Ascending aorta (tissue), 2 donors: ENCODE measurements at regions of chr17 and their contacts with region 1.

Region 1: DNA sequence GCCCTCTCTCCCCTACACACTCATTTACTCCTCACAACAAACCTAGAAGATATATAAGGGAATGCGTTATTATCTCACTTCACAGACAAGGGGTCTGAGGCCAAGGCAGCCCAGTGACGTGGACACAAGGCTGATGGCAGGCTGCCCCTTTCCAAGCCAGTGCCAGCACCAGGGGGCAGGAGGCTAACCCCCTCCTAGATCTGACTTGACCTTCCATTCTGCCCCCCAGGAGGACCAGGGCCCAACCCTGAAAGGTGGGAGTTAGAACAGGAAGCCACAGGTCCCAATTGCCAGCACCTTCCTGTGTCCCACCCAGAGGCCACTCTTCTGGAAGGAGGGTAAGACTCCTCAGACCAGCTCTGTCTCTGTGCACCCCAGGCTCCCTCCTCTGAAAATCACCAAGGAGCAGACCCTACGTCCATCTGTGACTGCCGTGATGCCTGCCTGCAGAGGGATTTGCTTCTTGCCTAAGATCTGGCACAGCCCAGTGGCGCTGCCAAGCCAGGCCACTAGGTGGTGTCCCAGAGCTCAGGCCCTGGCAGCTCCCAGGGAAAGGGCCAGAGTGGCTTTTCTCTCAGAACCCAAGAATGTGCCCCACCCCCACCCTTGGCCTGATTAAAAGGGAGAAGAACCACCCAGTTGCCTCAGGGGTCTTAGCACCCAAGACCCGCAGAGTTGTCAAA is 42.4 kb upstream of the MRPS23 start:
- DNase-seq: peak; percentile 70 to 95
- H3K4me3 ChIP-seq: no peak overlapping the region
- H3K27ac ChIP-seq: peak overlapping the region; percentile 88 to 97
- H3K4me1 ChIP-seq: peaks cover 34 to 65% of the 10 kb centered on the region in 2 donors
- H3K27me3 ChIP-seq: no peaks in the 10 kb centered on the region
- CTCF ChIP-seq: peak; percentile 96 to 99 (median 96)

Region 2: GRCh38 chr17:57875309-57876115 is 16.8 kb before region 1 on chr17:
- intact Hi-C with region 1: loop called (anchors 1 kb)
- DNase-seq: peak; percentile 74 to 96
- H3K4me3 ChIP-seq: peak overlapping the region in 1 of 2 donors; percentile 49
- H3K27ac ChIP-seq: peak overlapping the region; percentile 80 to 85
- H3K4me1 ChIP-seq: peaks cover 33 to 52% of the 10 kb centered on the region in 2 donors
- H3K27me3 ChIP-seq: no peaks in the 10 kb centered on the region
- CTCF ChIP-seq: peak; percentile 43 to 65 (median 63)

Region 3: DNA sequence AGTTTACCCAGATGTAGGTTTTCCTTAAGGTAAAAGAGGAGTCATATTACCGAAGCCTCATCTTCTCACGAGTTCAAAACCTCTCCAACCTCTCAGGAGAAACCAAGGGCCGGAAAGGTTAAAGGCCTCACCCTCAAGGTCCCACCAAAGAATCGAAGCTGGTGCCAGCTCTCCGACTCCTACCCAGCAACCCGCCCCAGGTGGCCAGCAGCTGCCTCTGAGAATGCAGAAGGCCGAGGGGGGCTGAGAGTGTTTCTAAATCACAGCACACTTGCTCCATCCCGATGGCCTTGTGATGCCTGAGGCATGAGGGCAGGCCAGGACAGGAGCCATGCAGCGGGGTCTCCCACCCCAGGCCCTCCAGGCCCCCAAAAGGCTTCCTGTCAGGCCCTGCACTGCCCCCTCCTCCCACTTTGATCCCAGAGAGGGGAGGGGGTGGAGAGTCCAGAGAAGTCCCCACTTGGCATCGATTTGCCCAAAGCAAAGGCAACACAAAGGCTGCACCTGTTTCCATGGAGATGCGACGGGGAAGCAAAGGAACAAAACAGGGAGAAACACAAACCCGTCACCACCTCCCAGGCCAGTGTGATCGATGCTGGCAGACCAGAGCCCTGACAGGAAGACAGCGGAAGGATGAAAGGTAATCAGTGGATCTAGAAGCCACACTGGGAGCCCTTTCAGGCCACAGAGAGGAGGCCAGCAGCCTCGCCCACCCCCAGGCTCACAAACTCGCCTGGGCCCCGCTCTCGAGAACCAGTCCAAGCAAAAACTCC is 23.9 kb after region 1 on chr17:
- intact Hi-C with region 1: loop called (anchors 2 kb)
- DNase-seq: no peak
- H3K4me3 ChIP-seq: no peak overlapping the region
- H3K27ac ChIP-seq: peak overlapping the region; percentile 20 to 44
- H3K4me1 ChIP-seq: peaks cover 0 to 51% of the 10 kb centered on the region in 2 donors
- H3K27me3 ChIP-seq: no peaks in the 10 kb centered on the region
- CTCF ChIP-seq: no peak

Region 4: DNA sequence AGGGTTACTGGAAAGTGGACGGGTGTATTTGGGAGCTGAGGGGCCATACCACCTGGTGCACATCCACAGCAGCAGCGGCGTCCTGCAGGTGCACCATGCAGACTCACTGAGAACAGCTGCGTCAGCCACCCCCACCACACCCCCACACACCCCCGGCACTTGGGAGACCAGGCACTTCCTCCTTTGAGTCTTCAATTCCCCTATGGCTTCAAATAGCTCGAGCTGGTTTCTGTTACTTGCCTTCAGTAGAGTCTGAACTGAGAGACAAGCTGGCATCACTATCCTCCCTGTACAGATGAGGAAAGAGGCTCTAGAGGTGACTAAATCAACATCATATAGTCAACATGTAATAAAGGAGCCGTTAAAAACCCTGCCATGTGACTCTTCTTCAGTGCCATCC is 47.5 kb after region 1 on chr17:
- intact Hi-C with region 1: no loop called
- DNase-seq: no peak
- H3K4me3 ChIP-seq: no peak overlapping the region
- H3K27ac ChIP-seq: no peak overlapping the region
- H3K4me1 ChIP-seq: peaks cover 11 to 44% of the 10 kb centered on the region in 2 donors
- H3K27me3 ChIP-seq: no peaks in the 10 kb centered on the region
- CTCF ChIP-seq: no peak

Region 5: DNA sequence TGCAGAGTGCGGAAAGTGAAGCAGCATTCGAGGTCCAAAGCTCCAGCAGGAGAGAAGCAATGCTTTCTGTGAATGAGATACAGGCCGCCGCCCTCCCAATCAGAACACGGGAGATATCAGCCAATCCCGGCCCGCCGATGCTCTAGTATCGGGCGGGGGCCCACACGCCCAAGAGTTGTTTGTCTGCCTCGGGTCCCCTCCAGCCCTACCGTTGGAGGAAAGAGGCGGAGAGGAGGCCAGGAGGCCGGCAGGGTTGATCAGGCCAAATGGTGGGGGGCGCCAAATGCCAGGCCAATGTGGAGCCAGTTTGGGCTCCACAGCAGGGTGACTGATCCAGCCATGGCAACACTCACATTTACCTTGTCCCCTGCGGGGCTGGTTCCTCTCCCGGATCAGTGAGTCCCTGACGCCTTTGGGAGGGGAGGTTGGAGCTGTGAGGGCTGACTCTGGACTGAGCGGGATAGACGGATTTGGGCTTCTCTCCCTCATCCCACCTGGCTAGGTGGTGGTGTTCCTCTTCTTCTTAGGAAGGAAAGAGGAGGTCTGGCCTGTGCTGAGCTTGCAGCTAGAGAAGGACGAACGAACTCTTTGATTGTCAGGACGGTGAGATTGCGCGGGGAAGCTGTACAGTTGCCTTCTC is 73.4 kb after region 1 on chr17:
- intact Hi-C with region 1: no loop called
- DNase-seq: peak in 1 of 2 donors; percentile 55
- H3K4me3 ChIP-seq: no peak overlapping the region
- H3K27ac ChIP-seq: no peak overlapping the region
- H3K4me1 ChIP-seq: no peaks in the 10 kb centered on the region
- H3K27me3 ChIP-seq: no peaks in the 10 kb centered on the region
- CTCF ChIP-seq: no peak

Region 6: GRCh38 chr17:57987580-57988421 is 95.5 kb after region 1 on chr17 and contains the start of gene VEZF1:
- intact Hi-C with region 1: loop called (anchors 1 kb)
- DNase-seq: peak in 1 of 2 donors; percentile 85
- H3K4me3 ChIP-seq: peak within 1 kb of the TSS; percentile 84 to 85
- H3K27ac ChIP-seq: peak within 1 kb of the TSS; percentile 97 to 98
- H3K4me1 ChIP-seq: peaks cover 0 to 19% of the 10 kb centered on the region in 2 donors
- H3K27me3 ChIP-seq: no peaks in the 10 kb centered on the region
- CTCF ChIP-seq: no peak
- total RNA-seq, gene VEZF1: 47.4 TPM